HepG2 (cell line): ENCODE measurements at regions of chr9 and their contacts with region 1.

Region 1: DNA sequence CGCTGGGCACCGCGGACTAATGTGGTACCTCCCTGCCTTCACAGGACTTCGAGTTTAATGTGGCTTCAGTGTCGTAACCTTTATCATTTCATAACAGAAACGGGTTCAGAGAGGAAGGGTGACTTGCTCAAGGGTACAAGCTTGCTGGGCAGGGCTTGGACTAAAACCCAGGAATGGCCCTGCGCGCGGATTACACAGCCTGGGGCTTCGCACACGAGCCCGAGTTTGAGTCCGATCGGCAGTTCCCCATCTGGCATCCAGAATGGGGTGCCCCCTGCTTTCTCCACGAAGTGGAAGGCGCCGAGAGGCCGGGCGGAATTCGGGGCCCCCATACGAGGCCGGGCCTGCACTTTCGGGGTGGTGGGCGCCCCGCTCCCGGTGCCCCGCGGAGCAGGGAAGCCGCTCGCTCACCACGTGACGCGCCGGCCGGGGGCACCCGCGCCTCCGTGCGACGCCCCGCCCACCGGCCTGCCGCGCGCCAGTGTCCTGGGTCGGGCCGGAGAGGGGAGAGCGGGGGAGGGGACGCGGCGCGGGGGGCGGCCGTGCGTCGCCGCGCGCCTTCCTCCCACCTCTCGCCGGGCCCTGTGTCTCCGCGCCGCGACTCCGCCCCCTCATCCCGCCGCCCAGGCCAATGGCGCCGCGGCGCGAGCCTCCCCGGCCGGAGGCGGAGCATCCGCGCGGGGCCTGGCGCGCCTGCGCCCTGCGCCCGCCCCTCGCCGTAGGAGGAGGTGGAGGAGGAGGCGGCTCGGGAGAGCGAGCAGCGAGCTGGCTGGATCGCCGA is at the start of gene SET:
- DNase-seq: peak; percentile 84
- ATAC-seq: peak; percentile 70
- H3K4me3 ChIP-seq: peak within 1 kb of the TSS; percentile 71 to 81 (median 77)
- H3K27ac ChIP-seq: peak within 1 kb of the TSS; percentile 91
- H3K4me1 ChIP-seq: peaks cover 65% of the 10 kb centered on the region
- H3K27me3 ChIP-seq: no peaks in the 10 kb centered on the region; a peak in 1 of 5 replicates
- CTCF ChIP-seq: no peak
- EP300 ChIP-seq: no peak; a peak in 1 of 4 replicates
- POLR2A ChIP-seq: peak; percentile 45 to 78; a peak in 1 of 4 replicates
- RAD21 ChIP-seq: peak; percentile 25; the same call in 1 of the 2 replicates
- total RNA-seq, gene SET: 611 and 724 TPM in 2 replicates

Region 2: DNA sequence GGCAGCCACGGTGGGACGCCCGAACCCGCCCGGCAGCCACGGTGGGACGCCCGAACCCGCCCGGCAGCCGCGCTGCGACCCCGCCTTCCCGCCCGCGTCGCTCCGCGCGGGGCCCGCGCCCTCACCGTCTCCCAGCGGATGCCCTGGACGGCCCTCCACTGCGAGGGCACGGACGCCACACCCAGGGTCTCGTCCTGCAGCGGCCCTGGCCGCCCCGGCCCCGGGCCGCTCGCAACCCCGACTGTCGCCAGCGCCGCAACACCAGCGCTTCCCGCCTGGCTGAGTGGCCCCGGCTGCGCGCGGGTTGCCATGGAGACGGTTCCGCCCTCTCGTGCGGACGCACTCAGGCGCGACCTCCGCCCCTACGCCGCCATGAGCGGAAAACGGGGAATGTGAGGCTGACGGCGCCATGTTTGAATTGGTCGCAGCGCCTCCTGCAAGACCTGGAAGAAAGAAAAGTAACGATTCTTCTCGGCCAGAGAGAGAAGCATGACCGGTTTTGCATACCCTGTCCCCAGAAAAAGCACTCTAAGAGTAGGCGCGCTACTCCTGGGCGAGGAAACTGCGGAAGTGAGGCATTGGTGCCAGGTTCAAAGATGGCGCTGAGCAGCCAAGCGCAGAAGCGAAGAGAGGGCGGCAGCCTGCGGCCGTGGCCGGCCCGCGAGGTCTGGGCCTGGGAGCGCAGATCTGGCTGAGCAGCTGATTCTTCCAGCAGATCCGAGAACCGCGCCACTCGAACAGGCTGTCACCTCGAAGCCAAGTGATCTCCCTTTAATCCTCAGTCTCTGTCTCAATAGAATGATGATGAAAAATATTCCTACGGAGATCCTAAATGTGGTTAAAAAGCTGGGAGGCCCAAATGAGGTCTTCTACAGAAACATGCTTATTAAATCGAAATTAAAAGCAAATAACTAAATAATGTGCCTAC is 32.0 kb before region 1 on chr9 and contains the start of gene DYNC2I2:
- CTCF ChIA-PET with region 1: no interaction called
- POLR2A ChIA-PET with region 1: interaction called, 11 read pairs
- in situ Hi-C with region 1: no loop called
- intact Hi-C with region 1: no loop called
- DNase-seq: peak; percentile 87
- ATAC-seq: peak; percentile 98
- H3K4me3 ChIP-seq: peak within 1 kb of the TSS; percentile 68 to 84 (median 73)
- H3K27ac ChIP-seq: peak within 1 kb of the TSS; percentile 100
- H3K4me1 ChIP-seq: peaks cover 5% of the 10 kb centered on the region; the same call in 1 of the 2 replicates
- H3K27me3 ChIP-seq: no peaks in the 10 kb centered on the region
- CTCF ChIP-seq: 0 out of 2 replicates have a peak, but pooled peaks have one; percentile 18
- EP300 ChIP-seq: no peak
- POLR2A ChIP-seq: peak; percentile 68 to 74
- RAD21 ChIP-seq: peak; percentile 57
- total RNA-seq, gene DYNC2I2: 31.1 and 40.2 TPM in 2 replicates

Region 3: GRCh38 chr9:128677794-128678193 is 10.9 kb before region 1 on chr9:
- CTCF ChIA-PET with region 1: no interaction called
- POLR2A ChIA-PET with region 1: interaction called, 14 read pairs
- in situ Hi-C with region 1: no loop called
- intact Hi-C with region 1: no loop called
- DNase-seq: no peak
- ATAC-seq: no peak
- H3K4me3 ChIP-seq: peak overlapping the region in 1 of 3 experiments; percentile 10; a peak in 1 of 6 replicates
- H3K27ac ChIP-seq: no peak overlapping the region
- H3K4me1 ChIP-seq: peaks cover 11% of the 10 kb centered on the region; the same call in 1 of the 2 replicates
- H3K27me3 ChIP-seq: no peaks in the 10 kb centered on the region
- CTCF ChIP-seq: no peak
- EP300 ChIP-seq: no peak
- POLR2A ChIP-seq: no peak
- RAD21 ChIP-seq: no peak

Region 4: GRCh38 chr9:128723866-128724743 is 35.4 kb after region 1 on chr9 and contains the start of gene ZDHHC12:
- CTCF ChIA-PET with region 1: no interaction called
- POLR2A ChIA-PET with region 1: interaction called, 11 read pairs
- in situ Hi-C with region 1: no loop called
- intact Hi-C with region 1: no loop called
- DNase-seq: peak; percentile 97
- ATAC-seq: peak; percentile 95
- H3K4me3 ChIP-seq: peak within 1 kb of the TSS; percentile 70 to 88 (median 74)
- H3K27ac ChIP-seq: peak within 1 kb of the TSS; percentile 34
- H3K4me1 ChIP-seq: peaks cover 38% of the 10 kb centered on the region
- H3K27me3 ChIP-seq: no peaks in the 10 kb centered on the region
- CTCF ChIP-seq: no peak
- EP300 ChIP-seq: peak in 1 of 2 experiments; percentile 21; a peak in 1 of 4 replicates
- POLR2A ChIP-seq: peak; percentile 78 to 95
- RAD21 ChIP-seq: 0 out of 2 replicates have a peak, but pooled peaks have one; percentile 32
- total RNA-seq, gene ZDHHC12: 18.3 and 28.0 TPM in 2 replicates